ENCODE measurements at regions of chr1 and their contacts with region 1.

Region 1: DNA sequence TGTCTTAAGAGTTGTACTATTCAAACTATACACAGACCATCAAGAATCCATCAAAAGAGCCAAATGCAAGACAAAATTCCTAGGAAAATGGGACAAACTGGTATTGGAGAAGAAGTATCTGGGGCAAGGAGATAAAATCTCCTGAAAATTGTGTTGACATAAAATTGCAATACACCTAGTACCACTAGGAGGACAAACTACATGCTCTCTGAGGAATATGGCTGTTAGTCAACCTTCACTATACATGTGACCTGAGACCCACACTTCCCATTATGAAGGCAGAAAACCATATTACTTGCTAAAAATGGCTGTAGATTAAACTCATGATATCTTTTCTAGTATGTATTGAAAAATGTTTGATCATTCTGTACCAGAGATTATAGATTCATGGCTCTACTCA is 30.0 kb downstream of the IRF2BP2 start:
- DNase-seq: no peak
- ATAC-seq: no peak
- H3K4me3 ChIP-seq: no peak overlapping the region
- H3K27ac ChIP-seq: no peak overlapping the region
- H3K4me1 ChIP-seq: no peaks in the 10 kb centered on the region
- H3K27me3 ChIP-seq: no peaks in the 10 kb centered on the region
- CTCF ChIP-seq: no peak

Region 2: DNA sequence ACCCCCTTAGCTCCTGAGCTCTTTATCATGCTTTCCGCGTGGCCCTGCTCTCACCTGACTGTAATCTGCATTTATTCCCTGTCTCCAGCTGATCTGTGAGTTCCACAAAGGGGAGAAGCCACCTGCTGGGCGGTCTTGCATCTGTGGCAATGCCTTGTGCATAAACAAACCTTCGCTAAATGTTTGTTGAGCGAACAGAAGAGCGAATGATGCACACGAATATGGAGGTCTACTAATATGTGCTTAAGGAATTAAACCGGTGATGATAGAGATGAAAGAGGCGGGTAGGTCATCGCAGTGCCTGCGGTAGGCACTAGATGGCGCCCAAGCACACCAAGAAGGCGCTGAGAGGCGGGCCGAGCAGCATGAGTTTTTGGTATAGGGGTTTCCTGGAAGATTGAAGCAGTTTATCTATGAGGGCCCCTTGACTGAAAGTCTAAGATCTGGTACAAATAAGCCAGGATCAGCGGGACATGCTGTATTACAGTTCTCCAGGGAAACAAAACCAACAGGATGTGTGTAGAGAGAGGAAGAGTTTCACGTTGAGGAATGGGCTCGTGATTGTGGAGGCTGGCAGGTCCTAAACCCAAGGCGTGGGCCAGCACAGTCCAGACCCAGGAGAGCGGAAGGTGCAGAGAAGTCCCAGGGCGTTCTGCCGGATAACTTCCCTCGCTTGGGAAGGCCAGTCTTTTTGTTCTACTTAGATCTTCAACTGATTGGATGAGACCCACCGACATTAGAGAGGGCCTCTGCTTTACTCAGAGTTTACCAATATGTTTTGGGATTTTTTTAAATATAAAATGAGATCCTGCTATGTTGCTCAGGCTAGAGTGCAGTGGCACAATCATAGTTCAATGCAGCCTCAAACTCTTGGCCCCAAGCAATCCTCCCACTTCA is 514.0 kb after region 1 on chr1:
- intact Hi-C with region 1: loop called in 1 of 3 experiments (anchors 10 kb)
- DNase-seq: peak; percentile 57 to 91 (median 81)
- ATAC-seq: peak; percentile 75 to 94 (median 88)
- H3K4me3 ChIP-seq: no peak overlapping the region
- H3K27ac ChIP-seq: no peak overlapping the region
- H3K4me1 ChIP-seq: peaks cover 0 to 3% (median 0%) of the 10 kb centered on the region in 3 donors
- H3K27me3 ChIP-seq: no peaks in the 10 kb centered on the region
- CTCF ChIP-seq: peak; percentile 77 to 87 (median 86)

Measured in pancreas (tissue), 10 donors.